Right ventricle myocardium inferior (tissue), 1 donor: ENCODE measurements at regions of chr4 and their contacts with region 1.

Region 1: GRCh38 chr4:173494013-173494970 is 35.7 kb downstream of the HAND2 start:
- DNase-seq: no peak
- ATAC-seq: peak; percentile 83

Region 2: GRCh38 chr4:173318648-173319211 is 175.6 kb before region 1 on chr4:
- intact Hi-C with region 1: loop called (anchors 5 kb)
- DNase-seq: no peak
- ATAC-seq: no peak